ENCODE measurements at regions of chr7 and their contacts with region 1.

Region 1: GRCh38 chr7:141660259-141660658 is 41.7 kb downstream of the DENND11 start:
- DNase-seq: no peak
- ATAC-seq: no peak
- H3K4me3 Mint-ChIP-seq: no peak overlapping the region
- H3K27ac Mint-ChIP-seq: peak overlapping the region; percentile 71
- H3K4me1 Mint-ChIP-seq: peaks cover 10% of the 10 kb centered on the region
- H3K27me3 Mint-ChIP-seq: no peaks in the 10 kb centered on the region
- CTCF ChIP-seq: no peak

Region 2: GRCh38 chr7:141674702-141675101 is 14.4 kb after region 1 on chr7:
- CTCF ChIA-PET with region 1: interaction called, 14 read pairs
- POLR2A ChIA-PET with region 1: interaction called, 3 read pairs
- intact Hi-C with region 1: no loop called
- DNase-seq: peak; percentile 31
- ATAC-seq: peak; percentile 49
- H3K4me3 Mint-ChIP-seq: no peak overlapping the region
- H3K27ac Mint-ChIP-seq: peak overlapping the region; percentile 38
- H3K4me1 Mint-ChIP-seq: peaks cover 22% of the 10 kb centered on the region
- H3K27me3 Mint-ChIP-seq: no peaks in the 10 kb centered on the region
- CTCF ChIP-seq: peak; percentile 39